ENCODE measurements at regions of chr1 and their contacts with region 1.

Region 1: GRCh38 chr1:173867753-173868265 is at the start of gene GAS5:
- DNase-seq: peak; percentile 99
- ATAC-seq: peak; percentile 87
- H3K4me3 ChIP-seq: peak within 1 kb of the TSS; percentile 58 to 98 (median 94)
- H3K27ac ChIP-seq: peak within 1 kb of the TSS; percentile 91
- H3K4me1 ChIP-seq: peaks cover 45% of the 10 kb centered on the region
- H3K27me3 ChIP-seq: no peaks in the 10 kb centered on the region; a peak in 1 of 5 replicates
- CTCF ChIP-seq: no peak
- EP300 ChIP-seq: 0 out of 4 replicates have a peak, but pooled peaks of 1 of the 2 experiments have one; percentile 10
- POLR2A ChIP-seq: peak; percentile 99 to 100
- RAD21 ChIP-seq: no peak; the same call in 1 of the 2 replicates
- total RNA-seq, gene GAS5: 184 and 352 TPM in 2 replicates

Region 2: GRCh38 chr1:173476664-173477285 is 391.0 kb before region 1 on chr1:
- CTCF ChIA-PET with region 1: no interaction called
- POLR2A ChIA-PET with region 1: interaction called, 25 read pairs
- in situ Hi-C with region 1: no loop called
- intact Hi-C with region 1: no loop called
- DNase-seq: peak; percentile 93
- ATAC-seq: peak; percentile 87
- H3K4me3 ChIP-seq: peak overlapping the region; percentile 75 to 96 (median 91)
- H3K27ac ChIP-seq: peak overlapping the region; percentile 87
- H3K4me1 ChIP-seq: peaks cover 60% of the 10 kb centered on the region
- H3K27me3 ChIP-seq: no peaks in the 10 kb centered on the region; a peak in 1 of 5 replicates
- CTCF ChIP-seq: peak; percentile 51
- EP300 ChIP-seq: no peak
- POLR2A ChIP-seq: peak in 1 of 2 experiments; percentile 78; a peak in 3 of 4 replicates
- RAD21 ChIP-seq: no peak

Region 3: GRCh38 chr1:173824331-173825081 is 43.3 kb before region 1 on chr1 and contains the starts of genes CENPL and DARS2:
- CTCF ChIA-PET with region 1: no interaction called
- POLR2A ChIA-PET with region 1: interaction called, 20 read pairs
- in situ Hi-C with region 1: no loop called
- intact Hi-C with region 1: no loop called
- DNase-seq: peak; percentile 96
- ATAC-seq: peak; percentile 94
- H3K4me3 ChIP-seq: peak within 1 kb of the TSS; percentile 69 to 99 (median 80)
- H3K27ac ChIP-seq: peak within 1 kb of the TSS; percentile 89
- H3K4me1 ChIP-seq: peaks cover 45% of the 10 kb centered on the region
- H3K27me3 ChIP-seq: no peaks in the 10 kb centered on the region; a peak in 1 of 5 replicates
- CTCF ChIP-seq: no peak
- EP300 ChIP-seq: no peak; a peak in 1 of 4 replicates
- POLR2A ChIP-seq: peak; percentile 63 to 80
- RAD21 ChIP-seq: no peak
- total RNA-seq, gene CENPL: 14.2 and 17.9 TPM in 2 replicates
- total RNA-seq, gene DARS2: 27.7 and 45.4 TPM in 2 replicates

Region 4: DNA sequence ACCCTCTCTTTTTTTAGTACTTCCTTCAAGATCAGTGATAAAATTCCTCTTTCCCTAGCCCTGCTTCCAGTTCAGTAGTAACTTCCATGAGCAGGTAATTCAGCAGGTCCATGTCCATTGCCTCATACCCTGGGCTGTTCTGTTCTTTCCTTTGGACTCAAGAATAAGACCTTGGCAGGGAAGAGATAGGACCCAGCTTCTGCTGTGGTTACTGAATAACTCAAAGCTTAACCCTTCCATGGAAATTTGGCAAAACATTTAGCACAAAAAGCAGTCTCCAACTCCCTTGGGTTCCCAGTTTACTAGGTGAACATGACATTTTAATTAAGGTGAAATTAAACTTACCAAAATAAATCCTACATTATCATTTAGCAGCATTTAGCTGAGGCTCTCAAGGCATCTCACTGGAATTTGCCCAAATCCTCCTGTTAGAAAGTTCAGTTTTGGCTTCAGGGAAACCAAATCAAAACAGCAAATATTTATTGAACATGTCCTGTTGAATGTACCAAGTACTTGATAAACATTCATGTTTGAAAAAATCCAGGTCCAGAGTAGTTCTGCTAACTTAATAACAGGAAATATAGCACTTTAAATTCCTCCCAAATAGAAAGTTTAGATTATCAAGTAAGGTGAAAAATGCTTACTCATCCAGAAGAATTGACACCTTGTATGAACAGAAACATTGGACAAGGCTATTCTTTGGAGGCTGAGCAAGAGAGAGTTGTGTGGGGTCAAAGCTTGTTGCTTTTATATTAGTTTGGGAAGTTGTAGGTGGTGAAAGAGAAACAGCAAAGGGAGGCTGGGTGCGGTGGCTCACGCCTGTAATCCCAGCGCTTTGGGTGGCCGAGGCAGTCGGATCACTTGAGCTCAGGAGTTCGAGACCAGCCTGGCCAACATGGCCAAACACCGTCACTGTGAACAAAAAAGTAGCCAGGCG is 57.8 kb after region 1 on chr1:
- CTCF ChIA-PET with region 1: no interaction called
- POLR2A ChIA-PET with region 1: interaction called, 18 read pairs
- in situ Hi-C with region 1: no loop called
- intact Hi-C with region 1: loop called (anchors 5 kb)
- DNase-seq: peak; percentile 77
- ATAC-seq: peak; percentile 96
- H3K4me3 ChIP-seq: peak overlapping the region in 1 of 3 experiments; percentile 29; a peak in 3 of 6 replicates
- H3K27ac ChIP-seq: peak overlapping the region; percentile 78
- H3K4me1 ChIP-seq: peaks cover 28% of the 10 kb centered on the region
- H3K27me3 ChIP-seq: no peaks in the 10 kb centered on the region
- CTCF ChIP-seq: no peak
- EP300 ChIP-seq: peak in 1 of 2 experiments; percentile 45; a peak in 1 of 4 replicates
- POLR2A ChIP-seq: peak; percentile 54 to 59; a peak in 2 of 4 replicates
- RAD21 ChIP-seq: no peak

Region 5: DNA sequence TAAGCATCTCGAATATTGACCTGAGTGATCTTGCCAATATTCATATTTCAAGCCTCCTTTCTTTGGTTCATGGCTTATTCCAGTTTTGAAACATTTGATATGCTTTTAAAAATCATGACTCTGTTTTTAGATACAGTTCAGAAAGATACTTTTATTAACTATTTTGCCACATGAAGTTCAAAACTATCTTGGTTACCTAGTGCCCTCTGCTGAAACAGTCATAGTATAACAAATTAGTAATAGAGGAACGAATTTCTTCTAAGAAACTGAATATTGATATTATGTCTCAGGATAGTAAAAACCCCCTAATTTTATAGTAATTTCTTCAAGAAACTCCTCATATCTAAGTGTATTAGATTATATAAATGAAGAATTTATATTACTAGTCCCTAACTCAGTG is 206.9 kb after region 1 on chr1:
- CTCF ChIA-PET with region 1: no interaction called
- POLR2A ChIA-PET with region 1: no interaction called
- in situ Hi-C with region 1: loop called (anchors 10 kb)
- intact Hi-C with region 1: no loop called
- DNase-seq: no peak
- ATAC-seq: no peak
- H3K4me3 ChIP-seq: no peak overlapping the region
- H3K27ac ChIP-seq: no peak overlapping the region
- H3K4me1 ChIP-seq: 0 out of 2 replicates have a peak, but pooled peaks cover 14% of the 10 kb centered on the region
- H3K27me3 ChIP-seq: no peaks in the 10 kb centered on the region
- CTCF ChIP-seq: peak; percentile 37; the same call in 1 of the 2 replicates
- EP300 ChIP-seq: no peak
- POLR2A ChIP-seq: no peak
- RAD21 ChIP-seq: no peak

Measured in HepG2 (cell line).